Activated T-helper 1 cell treated with anti-CD3 and anti-CD28 coated beads, Interleukin-12 subunit alpha, Interleukin-12 subunit beta, Interleukin-2, Interleukin-4 antibody, amounts not matched to agents 30 ng/mL and 10 ng/mL and 1 ng/mL, durations not matched to agents 14 hours and 24 hours and 36 hours (primary cell): ENCODE measurements at regions of chr6 and their contacts with region 1.

Region 1: GRCh38 chr6:63714091-63714490 is 78.5 kb downstream of the PHF3 start:
- DNase-seq: no peak
- H3K4me3 Mint-ChIP-seq: no peak overlapping the region
- H3K27ac Mint-ChIP-seq: no peak overlapping the region
- H3K4me1 Mint-ChIP-seq: peaks cover 5% of the 10 kb centered on the region
- H3K27me3 Mint-ChIP-seq: no peaks in the 10 kb centered on the region

Region 2: DNA sequence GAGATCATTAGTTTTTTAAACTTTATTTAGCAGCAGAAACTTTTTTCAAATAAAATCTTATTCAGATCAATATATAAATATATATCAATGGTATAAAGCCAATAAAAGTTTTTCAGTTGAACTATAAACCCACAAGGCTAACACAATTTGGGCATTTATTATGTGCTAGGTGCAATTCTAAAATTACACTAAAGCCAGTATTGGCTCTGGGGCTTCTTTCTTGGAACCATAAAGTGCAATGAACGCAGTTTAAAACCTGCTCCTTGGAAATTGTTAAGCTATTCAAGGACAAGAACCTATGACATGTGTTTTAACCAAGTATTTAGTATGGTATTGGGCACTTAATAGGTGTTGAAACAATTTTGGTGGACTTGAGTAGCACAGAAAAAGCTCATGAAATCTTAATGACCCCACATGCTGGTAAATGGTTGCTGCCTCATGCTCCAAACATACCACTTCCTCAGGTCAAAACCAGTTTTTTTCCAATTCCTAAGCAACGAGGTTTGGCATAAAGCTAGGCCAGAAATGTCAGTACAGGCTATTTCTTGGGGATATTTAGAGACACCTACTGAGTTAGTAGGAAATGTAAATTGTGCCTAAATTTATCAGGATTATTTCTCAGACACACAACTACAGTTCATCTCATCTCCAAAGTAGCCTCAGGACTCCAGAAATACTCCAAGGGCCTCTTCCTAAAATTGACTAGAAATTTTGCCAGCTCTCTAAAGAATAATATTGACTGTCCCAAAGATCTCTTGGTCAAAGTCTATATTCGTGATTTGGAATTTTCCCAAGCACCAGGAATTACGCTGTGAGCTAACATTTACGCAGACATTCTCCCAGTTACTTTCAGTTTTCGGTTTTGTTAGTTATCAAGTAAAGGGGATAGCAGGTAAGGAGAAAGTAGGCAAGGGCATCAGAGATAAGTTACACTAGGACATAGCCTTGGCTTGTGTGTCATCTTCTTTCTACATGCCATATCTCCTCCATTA is 303.4 kb before region 1 on chr6:
- intact Hi-C with region 1: no loop called
- DNase-seq: no peak
- H3K4me3 Mint-ChIP-seq: no peak overlapping the region
- H3K27ac Mint-ChIP-seq: no peak overlapping the region
- H3K4me1 Mint-ChIP-seq: no peaks in the 10 kb centered on the region
- H3K27me3 Mint-ChIP-seq: no peaks in the 10 kb centered on the region

Region 3: DNA sequence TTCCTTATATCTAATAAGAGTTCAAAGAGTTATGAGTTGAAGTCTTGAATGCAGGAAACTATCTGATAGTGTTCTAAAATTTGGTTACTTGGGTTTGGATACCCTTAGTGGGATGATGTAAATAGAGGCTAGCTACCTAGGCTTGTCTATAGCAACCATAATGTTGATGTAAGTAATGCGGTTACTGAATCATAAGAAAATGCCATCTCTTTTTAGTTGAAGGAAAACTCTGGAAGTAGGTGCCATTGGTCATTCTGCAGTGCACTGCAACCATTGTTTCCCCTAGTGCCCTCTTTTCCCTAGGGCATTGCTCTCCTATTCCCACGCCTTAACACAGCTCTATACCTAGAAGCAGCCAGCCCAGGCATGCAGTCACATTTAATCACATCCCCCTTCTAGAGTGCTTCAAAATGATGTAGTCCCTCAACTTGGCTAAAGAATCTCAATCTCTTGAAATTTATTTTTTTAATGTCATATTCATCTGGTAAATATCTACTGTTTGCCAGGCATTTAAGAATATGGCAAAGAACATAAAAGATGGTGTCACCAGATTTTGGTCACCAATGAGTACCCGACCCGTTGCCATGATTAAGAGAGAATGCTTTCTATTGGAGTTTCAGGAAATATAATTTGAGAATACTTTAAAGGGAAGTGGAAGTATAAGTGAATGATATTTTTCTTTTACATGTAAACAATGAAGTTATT is 131.4 kb before region 1 on chr6:
- intact Hi-C with region 1: loop called (anchors 5 kb)
- DNase-seq: no peak
- H3K4me3 Mint-ChIP-seq: no peak overlapping the region
- H3K27ac Mint-ChIP-seq: no peak overlapping the region
- H3K4me1 Mint-ChIP-seq: no peaks in the 10 kb centered on the region
- H3K27me3 Mint-ChIP-seq: peaks cover under 1% of the 10 kb centered on the region

Region 4: DNA sequence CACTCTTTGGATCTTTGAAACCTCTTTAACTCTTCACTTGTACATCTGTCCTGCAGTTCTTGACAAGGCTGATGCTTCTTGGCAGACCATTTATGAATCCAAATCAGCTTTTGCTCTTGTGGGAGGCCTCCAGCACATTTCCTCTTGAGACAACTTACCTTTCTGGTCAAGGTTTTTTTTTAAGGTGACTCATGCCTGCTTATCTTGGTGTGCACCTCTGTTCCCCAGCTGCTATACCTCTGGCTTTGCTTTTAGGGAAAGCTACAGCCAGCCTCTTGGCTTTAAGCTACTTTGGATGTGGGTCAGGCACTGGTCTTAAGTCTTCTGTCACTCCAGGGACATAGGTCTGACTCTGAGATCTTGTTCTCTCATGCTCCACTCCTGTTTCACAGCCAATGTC is 28.0 kb after region 1 on chr6:
- intact Hi-C with region 1: no loop called
- DNase-seq: no peak
- H3K4me3 Mint-ChIP-seq: no peak overlapping the region
- H3K27ac Mint-ChIP-seq: no peak overlapping the region
- H3K4me1 Mint-ChIP-seq: peaks cover 5% of the 10 kb centered on the region
- H3K27me3 Mint-ChIP-seq: no peaks in the 10 kb centered on the region

Region 5: DNA sequence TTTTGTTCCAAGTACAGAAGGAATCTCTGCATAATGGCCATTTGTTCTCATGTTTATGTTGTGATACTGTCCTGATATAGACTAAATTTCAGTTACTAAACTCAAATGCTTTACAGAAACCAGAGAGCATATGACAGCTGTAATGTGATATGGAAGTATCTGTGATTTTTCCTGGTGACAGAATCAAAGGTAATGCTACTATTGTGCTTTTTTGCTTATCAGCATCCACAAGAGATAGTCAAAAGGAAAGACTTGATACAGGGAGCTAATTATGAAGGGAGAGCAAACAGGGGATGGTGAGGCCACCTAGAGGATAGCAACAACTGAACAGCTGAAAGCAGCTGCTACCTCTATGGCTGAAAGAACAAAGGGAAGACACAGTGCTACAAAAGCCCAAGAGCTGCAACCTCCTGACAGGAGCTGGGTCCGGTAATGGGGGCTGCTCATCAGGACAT is 102.9 kb after region 1 on chr6:
- intact Hi-C with region 1: no loop called
- DNase-seq: no peak
- H3K4me3 Mint-ChIP-seq: no peak overlapping the region
- H3K27ac Mint-ChIP-seq: no peak overlapping the region
- H3K4me1 Mint-ChIP-seq: no peaks in the 10 kb centered on the region
- H3K27me3 Mint-ChIP-seq: peaks cover 1% of the 10 kb centered on the region